MCF 10A (cell line): ENCODE measurements at regions of chr6 and their contacts with region 1.

Region 1: DNA sequence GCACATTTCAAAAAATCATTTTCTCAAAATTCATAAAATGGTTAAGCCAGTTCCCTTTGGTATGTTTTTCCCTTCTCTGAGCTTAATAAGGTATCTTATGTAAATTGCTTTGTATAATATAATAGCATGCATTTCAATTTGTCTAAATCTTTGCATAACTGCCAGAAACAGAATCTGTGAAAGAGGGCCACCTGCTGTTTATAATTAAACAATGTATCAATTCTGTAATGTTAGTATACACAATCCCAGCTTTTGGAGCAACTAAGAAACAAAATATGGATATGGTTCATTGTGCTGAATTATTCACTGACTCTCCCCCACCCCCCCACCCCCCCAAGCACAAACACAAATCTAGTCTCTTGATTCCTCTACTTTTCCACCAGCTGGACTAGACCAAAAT is 54.8 kb downstream of the GPX5 start:
- DNase-seq: peak; percentile 13
- H3K4me3 Mint-ChIP-seq: no peak overlapping the region
- H3K27ac Mint-ChIP-seq: no peak overlapping the region
- H3K4me1 Mint-ChIP-seq: peaks cover 7% of the 10 kb centered on the region
- H3K27me3 Mint-ChIP-seq: no peaks in the 10 kb centered on the region
- CTCF ChIP-seq: peak; percentile 31

Region 2: GRCh38 chr6:28393911-28394662 is 186.4 kb before region 1 on chr6:
- CTCF ChIA-PET with region 1: interaction called, 3 read pairs
- POLR2A ChIA-PET with region 1: no interaction called
- intact Hi-C with region 1: loop called (anchors 1 kb)
- DNase-seq: peak; percentile 35
- H3K4me3 Mint-ChIP-seq: no peak overlapping the region
- H3K27ac Mint-ChIP-seq: no peak overlapping the region
- H3K4me1 Mint-ChIP-seq: peaks cover 31% of the 10 kb centered on the region
- H3K27me3 Mint-ChIP-seq: no peaks in the 10 kb centered on the region
- CTCF ChIP-seq: peak; percentile 33

Region 3: DNA sequence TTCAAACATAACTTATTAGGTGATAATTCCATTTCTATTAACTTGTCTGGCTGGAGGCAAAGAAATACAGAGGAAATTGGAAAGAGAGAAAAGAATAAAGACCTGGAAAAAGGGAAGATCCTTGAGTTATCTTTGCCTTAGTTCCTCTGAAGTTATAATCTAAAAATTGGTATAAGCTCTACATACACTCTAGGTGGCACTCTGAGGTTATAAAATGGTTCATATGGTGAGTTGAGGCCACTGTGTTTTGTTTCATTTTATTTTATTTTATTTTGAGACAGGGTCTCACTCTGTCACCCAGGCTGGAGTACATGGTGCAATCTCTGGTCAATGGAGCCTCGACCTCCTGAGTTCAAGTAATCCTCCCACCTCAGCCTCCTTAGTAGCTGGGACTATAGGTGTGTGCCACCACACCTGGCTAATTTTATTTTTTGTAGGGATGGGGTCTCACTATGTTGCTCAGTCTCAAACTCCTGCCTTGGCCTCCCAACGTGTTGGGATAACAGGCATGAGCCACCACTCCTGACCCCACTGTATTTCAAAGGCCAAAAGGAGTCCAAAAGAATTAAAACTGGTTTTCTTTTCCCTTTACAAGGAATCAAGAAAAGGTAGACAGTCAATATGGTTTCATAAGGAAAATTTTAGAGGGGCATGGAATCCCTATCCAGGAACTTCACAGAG is 84.2 kb before region 1 on chr6:
- CTCF ChIA-PET with region 1: interaction called, 20 read pairs
- POLR2A ChIA-PET with region 1: no interaction called
- intact Hi-C with region 1: no loop called
- DNase-seq: peak; percentile 6
- H3K4me3 Mint-ChIP-seq: no peak overlapping the region
- H3K27ac Mint-ChIP-seq: no peak overlapping the region
- H3K4me1 Mint-ChIP-seq: no peaks in the 10 kb centered on the region
- H3K27me3 Mint-ChIP-seq: no peaks in the 10 kb centered on the region
- CTCF ChIP-seq: no peak

Region 4: DNA sequence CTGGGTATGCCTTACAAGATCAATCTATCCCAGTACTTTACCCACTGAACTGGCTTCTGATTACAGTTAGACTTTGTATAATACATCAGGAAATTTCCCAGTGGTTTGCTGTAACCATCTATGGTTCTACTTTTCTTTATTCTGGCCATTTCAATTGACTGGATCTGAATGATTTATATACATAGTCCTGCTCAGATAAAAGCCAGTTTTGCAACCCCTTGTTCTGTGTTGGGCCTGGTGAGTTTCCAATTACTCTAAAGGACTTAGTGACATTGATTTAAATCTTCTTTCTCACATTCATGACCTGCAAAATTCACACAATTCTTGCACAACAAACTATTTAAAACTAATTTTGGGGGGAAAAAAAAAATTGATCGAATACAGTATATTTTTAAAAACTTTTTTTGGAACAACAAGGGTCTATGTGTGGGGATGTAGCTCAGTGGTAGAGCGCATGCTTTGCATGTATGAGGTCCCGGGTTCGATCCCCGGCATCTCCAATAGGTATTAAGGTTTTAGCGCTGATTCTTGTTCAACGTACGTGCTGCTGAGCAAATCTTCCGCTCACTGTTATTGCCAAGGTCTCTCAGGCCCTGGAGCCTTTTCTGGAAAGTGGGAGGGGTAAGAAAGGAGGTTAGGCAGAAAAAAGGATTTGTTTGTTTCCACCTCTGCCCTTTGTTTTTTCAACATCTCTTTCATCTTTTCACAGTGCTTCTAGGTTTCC is 62.7 kb after region 1 on chr6:
- CTCF ChIA-PET with region 1: no interaction called
- POLR2A ChIA-PET with region 1: no interaction called
- intact Hi-C with region 1: no loop called
- DNase-seq: peak; percentile 76
- H3K4me3 Mint-ChIP-seq: peak overlapping the region; percentile 71
- H3K27ac Mint-ChIP-seq: peak overlapping the region; percentile 76
- H3K4me1 Mint-ChIP-seq: peaks cover 6% of the 10 kb centered on the region
- H3K27me3 Mint-ChIP-seq: no peaks in the 10 kb centered on the region
- CTCF ChIP-seq: no peak